ENCODE measurements at regions of chr11 and their contacts with region 1.

Region 1: DNA sequence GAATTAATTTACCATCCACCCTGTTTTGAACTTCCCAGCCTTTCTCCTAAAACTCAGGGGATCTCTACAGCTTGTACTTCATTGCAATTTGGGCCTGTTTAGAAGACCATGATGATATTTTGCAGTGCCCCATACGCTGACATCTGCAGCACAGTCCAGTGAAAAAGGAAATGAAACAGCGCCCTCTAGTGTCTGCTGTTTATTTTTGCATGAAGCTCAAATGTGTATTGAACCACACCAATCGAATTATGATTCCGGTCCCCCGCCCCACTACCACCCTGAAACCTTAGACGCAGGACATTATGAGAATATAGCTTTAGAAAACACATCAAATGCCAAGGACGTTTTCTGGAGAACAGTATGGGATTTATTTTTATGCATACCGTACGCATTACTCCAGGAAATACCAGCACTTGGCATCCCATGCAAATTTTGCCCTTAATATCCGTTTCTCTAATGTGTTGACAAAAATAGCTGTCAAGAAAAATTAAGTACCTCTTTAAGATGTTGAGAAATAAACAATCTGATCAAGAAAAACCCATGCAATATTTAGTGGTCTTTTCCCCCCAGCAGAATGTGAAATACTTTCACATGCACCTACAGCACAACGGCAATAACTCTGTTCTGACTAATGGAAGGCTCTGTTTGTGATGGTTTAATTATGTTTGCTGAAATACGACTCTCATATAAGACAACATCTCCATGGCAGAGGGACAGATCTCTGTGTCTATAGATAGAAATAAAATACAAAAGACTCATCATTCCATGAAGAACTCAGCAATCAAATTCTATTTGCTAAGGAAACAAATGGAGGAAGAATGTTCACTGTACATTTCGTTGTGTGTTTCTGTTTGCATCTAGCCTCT is 93.9 kb downstream of the TECTA start:
- DNase-seq: peak; percentile 64
- H3K4me3 ChIP-seq: peak overlapping the region in 1 of 3 experiments; percentile 22
- H3K27ac ChIP-seq: no peak overlapping the region
- H3K4me1 ChIP-seq: peaks cover 5% of the 10 kb centered on the region
- H3K27me3 ChIP-seq: no peaks in the 10 kb centered on the region
- CTCF ChIP-seq: peak; percentile 68 to 76
- POLR2A ChIP-seq: no peak

Region 2: GRCh38 chr11:120912504-120912903 is 282.5 kb before region 1 on chr11:
- CTCF ChIA-PET with region 1: interaction called, 18 read pairs
- POLR2A ChIA-PET with region 1: no interaction called
- dilution Hi-C with region 1: no loop called
- intact Hi-C with region 1: no loop called
- DNase-seq: peak; percentile 26
- H3K4me3 ChIP-seq: no peak overlapping the region
- H3K27ac ChIP-seq: no peak overlapping the region
- H3K4me1 ChIP-seq: no peaks in the 10 kb centered on the region
- H3K27me3 ChIP-seq: no peaks in the 10 kb centered on the region
- CTCF ChIP-seq: peak in 1 of 2 donors; percentile 20
- POLR2A ChIP-seq: no peak

Region 3: GRCh38 chr11:120945042-120945441 is 249.9 kb before region 1 on chr11:
- CTCF ChIA-PET with region 1: interaction called, 10 read pairs
- POLR2A ChIA-PET with region 1: no interaction called
- dilution Hi-C with region 1: no loop called
- intact Hi-C with region 1: no loop called
- DNase-seq: no peak
- H3K4me3 ChIP-seq: no peak overlapping the region
- H3K27ac ChIP-seq: no peak overlapping the region
- H3K4me1 ChIP-seq: no peaks in the 10 kb centered on the region
- H3K27me3 ChIP-seq: no peaks in the 10 kb centered on the region
- CTCF ChIP-seq: peak in 1 of 2 donors; percentile 6
- POLR2A ChIP-seq: no peak

Region 4: GRCh38 chr11:121032546-121032945 is 162.4 kb before region 1 on chr11:
- CTCF ChIA-PET with region 1: interaction called, 10 read pairs
- POLR2A ChIA-PET with region 1: no interaction called
- dilution Hi-C with region 1: no loop called
- intact Hi-C with region 1: no loop called
- DNase-seq: no peak
- H3K4me3 ChIP-seq: no peak overlapping the region
- H3K27ac ChIP-seq: no peak overlapping the region
- H3K4me1 ChIP-seq: no peaks in the 10 kb centered on the region
- H3K27me3 ChIP-seq: no peaks in the 10 kb centered on the region
- CTCF ChIP-seq: no peak
- POLR2A ChIP-seq: no peak

Region 5: GRCh38 chr11:121207485-121208115 is 12.6 kb after region 1 on chr11:
- CTCF ChIA-PET with region 1: interaction called, 18 read pairs
- POLR2A ChIA-PET with region 1: no interaction called
- dilution Hi-C with region 1: no loop called
- intact Hi-C with region 1: no loop called
- DNase-seq: no peak
- H3K4me3 ChIP-seq: no peak overlapping the region
- H3K27ac ChIP-seq: no peak overlapping the region
- H3K4me1 ChIP-seq: no peaks in the 10 kb centered on the region
- H3K27me3 ChIP-seq: no peaks in the 10 kb centered on the region
- CTCF ChIP-seq: no peak
- POLR2A ChIP-seq: no peak

Region 6: GRCh38 chr11:121405646-121406045 is 210.7 kb after region 1 on chr11:
- CTCF ChIA-PET with region 1: no interaction called
- POLR2A ChIA-PET with region 1: no interaction called
- dilution Hi-C with region 1: no loop called
- intact Hi-C with region 1: no loop called
- DNase-seq: no peak
- H3K4me3 ChIP-seq: no peak overlapping the region
- H3K27ac ChIP-seq: no peak overlapping the region
- H3K4me1 ChIP-seq: no peaks in the 10 kb centered on the region
- H3K27me3 ChIP-seq: no peaks in the 10 kb centered on the region
- CTCF ChIP-seq: no peak
- POLR2A ChIP-seq: no peak

Measured in endothelial cell of umbilical vein (primary cell).